CD14-positive monocyte (primary cell): ENCODE measurements at regions of chr1 and their contacts with region 1.

Region 1: GRCh38 chr1:232767305-232768074 is 37.7 kb upstream of the MAP10 start:
- DNase-seq: peak; percentile 69 to 91 (median 91)
- H3K4me3 ChIP-seq: peak overlapping the region in 1 of 3 experiments; percentile 41
- H3K4me3 Mint-ChIP-seq: peak overlapping the region in 1 of 2 donors; percentile 68
- H3K27ac ChIP-seq: peak overlapping the region; percentile 50 to 75
- H3K27ac Mint-ChIP-seq: peak overlapping the region; percentile 72 to 90 (median 88)
- H3K4me1 ChIP-seq: peaks cover 42 to 45% of the 10 kb centered on the region in 2 donors
- H3K4me1 Mint-ChIP-seq: peaks cover 48% of the 10 kb centered on the region
- H3K27me3 ChIP-seq: no peaks in the 10 kb centered on the region
- H3K27me3 Mint-ChIP-seq: no peaks in the 10 kb centered on the region
- CTCF ChIP-seq: no peak

Region 2: GRCh38 chr1:232711996-232712395 is 55.5 kb before region 1 on chr1:
- intact Hi-C with region 1: loop called in 1 of 2 experiments (anchors 5 kb)
- DNase-seq: no peak
- H3K4me3 ChIP-seq: no peak overlapping the region
- H3K4me3 Mint-ChIP-seq: no peak overlapping the region
- H3K27ac ChIP-seq: no peak overlapping the region
- H3K27ac Mint-ChIP-seq: no peak overlapping the region
- H3K4me1 ChIP-seq: no peaks in the 10 kb centered on the region
- H3K4me1 Mint-ChIP-seq: no peaks in the 10 kb centered on the region
- H3K27me3 ChIP-seq: no peaks in the 10 kb centered on the region
- H3K27me3 Mint-ChIP-seq: peaks cover 0 to 7% (median 0%) of the 10 kb centered on the region in 3 donors
- CTCF ChIP-seq: no peak